Esophagus muscularis mucosa (tissue), 4 donors: ENCODE measurements at regions of chr9 and their contacts with region 1.

Region 1: DNA sequence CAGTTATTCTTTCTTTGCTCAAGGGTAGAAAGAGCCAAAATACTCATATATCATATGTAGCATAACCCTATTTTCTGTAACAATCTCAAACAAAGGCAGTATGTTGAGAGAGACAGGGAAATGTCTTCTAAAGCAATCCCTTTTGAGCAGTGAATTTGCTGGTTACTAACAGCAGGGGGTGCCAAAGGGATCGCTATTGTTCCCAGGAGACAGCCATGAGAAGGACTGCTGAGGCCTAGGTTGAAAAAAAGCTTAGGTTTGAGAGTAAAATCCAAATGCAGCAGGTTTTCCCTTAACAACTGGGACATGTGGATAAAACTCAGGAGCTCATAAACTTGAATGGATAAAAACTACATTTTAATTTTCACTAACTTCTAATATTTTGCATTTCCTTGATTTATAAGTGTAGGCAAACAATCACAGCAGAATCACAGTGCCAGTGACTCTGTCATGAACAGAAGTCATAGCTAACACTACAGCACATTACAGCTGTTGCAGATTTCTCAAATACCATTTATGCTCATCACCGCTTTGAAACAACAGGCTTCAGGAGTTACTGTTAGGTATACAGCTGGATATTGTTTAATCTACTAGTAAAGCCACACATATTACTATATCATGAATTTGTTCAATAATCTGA is 148.4 kb downstream of the MAPKAP1 start:
- DNase-seq: no peak
- H3K4me3 ChIP-seq: no peak overlapping the region
- H3K27ac ChIP-seq: no peak overlapping the region
- H3K4me1 ChIP-seq: peaks cover 0 to 10% (median 5%) of the 10 kb centered on the region in 4 donors
- H3K27me3 ChIP-seq: no peaks in the 10 kb centered on the region
- CTCF ChIP-seq: peak; percentile 76 to 82 (median 82)
- EP300 ChIP-seq: no peak
- POLR2A ChIP-seq: no peak

Region 2: GRCh38 chr9:125407974-125408900 is 150.3 kb before region 1 on chr9:
- intact Hi-C with region 1: loop called (anchors 5 kb)
- DNase-seq: peak; percentile 94
- H3K4me3 ChIP-seq: peak overlapping the region; percentile 62 to 77 (median 66)
- H3K27ac ChIP-seq: peak overlapping the region in 3 of 4 donors; percentile 37 to 63 (median 47)
- H3K4me1 ChIP-seq: peaks cover 5 to 15% (median 15%) of the 10 kb centered on the region in 4 donors
- H3K27me3 ChIP-seq: no peaks in the 10 kb centered on the region
- CTCF ChIP-seq: peak; percentile 64 to 87 (median 74)
- EP300 ChIP-seq: no peak
- POLR2A ChIP-seq: no peak

Region 3: GRCh38 chr9:125484350-125485282 is 74.0 kb before region 1 on chr9:
- intact Hi-C with region 1: loop called (anchors 5 kb)
- DNase-seq: peak; percentile 91
- H3K4me3 ChIP-seq: no peak overlapping the region
- H3K27ac ChIP-seq: peak overlapping the region; percentile 72 to 80 (median 78)
- H3K4me1 ChIP-seq: peaks cover 28 to 46% (median 41%) of the 10 kb centered on the region in 4 donors
- H3K27me3 ChIP-seq: no peaks in the 10 kb centered on the region
- CTCF ChIP-seq: no peak
- EP300 ChIP-seq: no peak
- POLR2A ChIP-seq: no peak

Region 4: GRCh38 chr9:125513668-125514413 is 44.7 kb before region 1 on chr9:
- intact Hi-C with region 1: no loop called
- DNase-seq: peak; percentile 91
- H3K4me3 ChIP-seq: peak overlapping the region; percentile 4 to 35 (median 20)
- H3K27ac ChIP-seq: peak overlapping the region in 3 of 4 donors; percentile 3 to 68 (median 49)
- H3K4me1 ChIP-seq: peaks cover 26 to 54% (median 39%) of the 10 kb centered on the region in 4 donors
- H3K27me3 ChIP-seq: no peaks in the 10 kb centered on the region
- CTCF ChIP-seq: no peak
- EP300 ChIP-seq: no peak
- POLR2A ChIP-seq: no peak

Region 5: DNA sequence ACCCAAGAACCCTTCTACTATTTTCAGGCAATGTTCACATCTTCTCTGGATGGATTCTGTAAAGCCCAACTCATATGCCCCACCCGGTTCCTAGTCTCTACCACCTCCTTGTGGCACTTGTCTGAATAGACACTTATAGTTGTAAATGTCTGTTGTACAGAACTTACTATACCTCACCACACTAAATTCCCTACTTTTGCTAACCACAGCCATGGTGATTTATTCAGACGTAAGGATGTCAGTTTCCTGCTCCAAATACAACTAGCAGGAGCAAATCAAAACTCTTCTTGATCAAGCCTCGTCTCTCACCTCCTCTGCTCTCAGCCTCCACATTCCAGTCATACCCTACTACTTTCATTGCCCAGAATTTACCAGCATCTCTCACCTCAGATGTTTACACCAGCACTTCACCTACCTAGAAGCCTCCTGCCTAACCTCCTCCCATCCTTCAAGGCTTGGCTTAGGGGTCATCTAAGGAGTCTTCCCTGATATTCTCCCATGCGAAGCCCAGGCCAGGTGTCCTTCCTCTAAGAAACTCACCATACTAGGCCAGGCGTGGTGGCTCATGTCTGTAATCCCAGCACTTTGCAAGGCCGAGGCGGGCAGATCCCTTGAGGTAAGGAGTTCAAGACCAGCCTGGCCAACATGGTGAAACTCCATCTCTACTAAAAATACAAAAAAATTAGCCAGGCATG is 73.0 kb after region 1 on chr9:
- intact Hi-C with region 1: loop called (anchors 5 kb)
- DNase-seq: no peak
- H3K4me3 ChIP-seq: no peak overlapping the region
- H3K27ac ChIP-seq: no peak overlapping the region
- H3K4me1 ChIP-seq: peaks cover 10 to 37% (median 21%) of the 10 kb centered on the region in 4 donors
- H3K27me3 ChIP-seq: no peaks in the 10 kb centered on the region
- CTCF ChIP-seq: peak; percentile 52 to 63 (median 62)
- EP300 ChIP-seq: no peak
- POLR2A ChIP-seq: no peak

Region 6: DNA sequence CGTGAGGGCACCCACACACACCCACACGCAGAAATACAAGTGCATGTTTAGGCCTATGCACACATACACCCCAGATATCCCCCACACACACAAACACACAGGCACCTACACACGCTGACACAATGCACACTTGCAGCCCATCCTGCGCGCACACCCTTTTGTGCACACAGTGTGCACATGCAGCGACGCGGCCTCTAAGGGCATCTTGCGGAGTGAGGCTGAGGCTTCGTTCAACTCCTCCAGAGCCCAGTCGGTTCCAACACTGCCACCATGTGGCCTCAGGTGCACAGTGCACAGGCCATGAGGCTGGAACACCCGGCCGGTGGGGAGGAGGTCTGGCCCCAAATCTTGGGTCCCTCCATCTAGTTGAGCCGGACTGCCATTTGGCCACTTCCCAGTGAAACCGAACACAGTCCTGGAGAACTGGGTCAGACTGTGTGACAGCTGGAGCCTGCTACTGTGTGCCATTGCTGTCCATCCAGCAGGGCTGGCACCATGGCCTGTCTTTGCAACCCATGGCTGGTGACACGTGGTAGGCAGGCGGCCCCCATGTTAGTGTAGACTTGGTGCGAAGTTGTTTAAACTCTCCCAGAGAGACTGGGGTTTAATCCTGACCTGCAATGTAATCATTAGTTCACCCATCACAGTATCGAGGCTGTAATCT is 670.3 kb after region 1 on chr9:
- intact Hi-C with region 1: loop called (anchors 10 kb)
- DNase-seq: peak; percentile 94
- H3K4me3 ChIP-seq: no peak overlapping the region
- H3K27ac ChIP-seq: no peak overlapping the region
- H3K4me1 ChIP-seq: peaks cover 0 to 8% (median 3%) of the 10 kb centered on the region in 4 donors
- H3K27me3 ChIP-seq: peaks cover 0 to 6% (median 0%) of the 10 kb centered on the region in 4 donors
- CTCF ChIP-seq: peak in 2 of 3 experiments; percentile 89 to 97
- EP300 ChIP-seq: no peak
- POLR2A ChIP-seq: no peak